Natural killer cell (primary cell): ENCODE measurements at regions of chr16 and their contacts with region 1.

Region 1: GRCh38 chr16:81403616-81404373 is 40.8 kb upstream of the CMIP start:
- DNase-seq: peak; percentile 83 to 88
- ATAC-seq: peak; percentile 88 to 96 (median 95)
- H3K4me3 ChIP-seq: no peak overlapping the region
- H3K4me3 Mint-ChIP-seq: no peak overlapping the region
- H3K27ac ChIP-seq: no peak overlapping the region
- H3K27ac Mint-ChIP-seq: peak overlapping the region in 1 of 2 donors; percentile 36
- H3K4me1 ChIP-seq: peaks cover 11% of the 10 kb centered on the region
- H3K4me1 Mint-ChIP-seq: peaks cover 0 to 8% of the 10 kb centered on the region in 2 donors
- H3K27me3 ChIP-seq: no peaks in the 10 kb centered on the region
- H3K27me3 Mint-ChIP-seq: no peaks in the 10 kb centered on the region
- CTCF ChIP-seq: peak; percentile 98

Region 2: DNA sequence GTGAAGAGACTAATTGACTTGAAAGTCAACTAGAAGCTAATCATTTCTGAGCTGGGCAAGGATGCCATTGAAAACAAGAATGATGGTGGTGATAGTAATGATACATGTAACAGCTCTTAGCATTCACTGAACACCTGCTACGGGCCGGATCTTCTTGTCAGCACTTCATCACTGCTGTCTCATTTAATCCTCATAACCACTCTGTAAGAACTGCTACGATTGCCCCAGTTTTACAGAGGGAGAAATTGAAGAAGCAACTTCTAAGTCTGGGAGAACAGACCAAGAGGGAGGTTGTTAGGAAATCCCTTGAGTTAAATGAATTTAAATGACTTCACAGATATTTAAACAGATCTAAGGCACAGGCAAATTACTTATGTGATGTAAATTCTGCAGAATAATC is 96.0 kb before region 1 on chr16:
- intact Hi-C with region 1: no loop called
- DNase-seq: no peak
- ATAC-seq: no peak
- H3K4me3 ChIP-seq: no peak overlapping the region
- H3K4me3 Mint-ChIP-seq: no peak overlapping the region
- H3K27ac ChIP-seq: no peak overlapping the region
- H3K27ac Mint-ChIP-seq: no peak overlapping the region
- H3K4me1 ChIP-seq: no peaks in the 10 kb centered on the region
- H3K4me1 Mint-ChIP-seq: peaks cover 18 to 24% of the 10 kb centered on the region in 2 donors
- H3K27me3 ChIP-seq: no peaks in the 10 kb centered on the region
- H3K27me3 Mint-ChIP-seq: no peaks in the 10 kb centered on the region
- CTCF ChIP-seq: no peak

Region 3: GRCh38 chr16:81632392-81633146 is 228.8 kb after region 1 on chr16:
- intact Hi-C with region 1: loop called (anchors 5 kb)
- DNase-seq: peak; percentile 68 to 91
- ATAC-seq: peak; percentile 84 to 87 (median 84)
- H3K4me3 ChIP-seq: no peak overlapping the region
- H3K4me3 Mint-ChIP-seq: peak overlapping the region; percentile 49
- H3K27ac ChIP-seq: peak overlapping the region; percentile 73
- H3K27ac Mint-ChIP-seq: peak overlapping the region; percentile 87 to 88
- H3K4me1 ChIP-seq: peaks cover 35% of the 10 kb centered on the region
- H3K4me1 Mint-ChIP-seq: peaks cover 40 to 53% of the 10 kb centered on the region in 2 donors
- H3K27me3 ChIP-seq: no peaks in the 10 kb centered on the region
- H3K27me3 Mint-ChIP-seq: no peaks in the 10 kb centered on the region
- CTCF ChIP-seq: no peak

Region 4: DNA sequence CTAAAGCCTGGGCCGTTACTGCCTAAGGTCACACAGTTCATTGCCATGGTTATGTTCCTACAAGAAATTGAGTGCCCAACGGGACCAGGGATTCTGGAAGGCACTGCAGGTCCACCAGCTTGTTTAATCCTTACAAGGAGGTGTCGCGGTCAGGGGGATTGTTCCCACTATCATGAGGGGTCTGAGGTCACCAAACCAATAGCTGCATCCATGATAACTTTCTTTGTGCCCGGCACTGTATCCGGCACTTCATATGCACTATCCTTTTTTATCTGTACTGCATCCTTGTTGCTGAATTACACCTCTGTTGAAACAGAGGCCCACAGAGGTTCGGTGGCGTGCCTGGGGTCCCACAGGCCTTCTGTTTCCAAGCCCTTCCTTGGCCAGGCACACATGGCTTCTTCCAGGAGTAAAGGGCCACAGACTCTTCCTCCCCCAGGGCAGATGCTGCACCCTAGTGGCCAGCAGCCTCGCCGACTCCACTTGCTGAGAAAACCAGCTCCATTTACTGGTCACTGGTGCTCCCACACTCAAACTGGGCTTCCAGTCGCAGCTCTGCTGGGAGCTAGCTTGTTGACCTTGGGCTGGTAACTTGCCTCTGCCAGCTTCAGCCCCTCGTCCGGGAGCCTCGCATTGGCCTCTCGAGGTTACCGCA is 293.3 kb after region 1 on chr16:
- intact Hi-C with region 1: loop called (anchors 1 kb)
- DNase-seq: peak; percentile 28 to 57
- ATAC-seq: peak; percentile 43 to 59 (median 52)
- H3K4me3 ChIP-seq: no peak overlapping the region
- H3K4me3 Mint-ChIP-seq: no peak overlapping the region
- H3K27ac ChIP-seq: no peak overlapping the region
- H3K27ac Mint-ChIP-seq: no peak overlapping the region
- H3K4me1 ChIP-seq: no peaks in the 10 kb centered on the region
- H3K4me1 Mint-ChIP-seq: no peaks in the 10 kb centered on the region
- H3K27me3 ChIP-seq: no peaks in the 10 kb centered on the region
- H3K27me3 Mint-ChIP-seq: no peaks in the 10 kb centered on the region
- CTCF ChIP-seq: peak; percentile 43

Region 5: DNA sequence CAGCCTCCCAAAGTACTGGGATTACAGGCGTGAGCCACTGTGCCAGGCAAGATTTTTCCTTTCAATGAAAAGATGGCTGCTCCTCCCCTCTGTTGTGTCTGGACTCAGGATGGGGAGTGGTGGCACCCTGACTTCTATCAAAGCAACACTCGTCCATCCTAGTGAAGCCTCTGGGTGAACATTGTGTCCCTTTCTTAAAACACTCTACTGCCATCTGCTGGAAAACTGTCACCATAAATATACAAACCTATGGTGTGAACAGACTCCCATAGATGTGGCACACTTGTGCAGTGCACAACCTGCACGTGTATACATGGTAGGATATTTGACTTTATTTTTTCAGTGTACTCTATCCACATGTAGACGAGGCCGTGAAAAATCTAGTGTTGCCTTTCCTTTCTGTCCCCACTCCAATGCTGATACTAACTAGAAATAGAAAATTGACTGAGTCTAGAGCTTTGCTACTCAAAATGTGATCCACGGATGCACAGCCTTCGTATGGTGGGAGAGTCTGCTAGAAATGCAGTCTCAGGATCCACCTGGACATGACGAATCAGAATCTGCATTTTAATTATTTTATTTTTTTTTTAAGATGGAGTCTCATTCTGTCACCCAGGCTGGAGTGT is 319.4 kb after region 1 on chr16:
- intact Hi-C with region 1: loop called (anchors 1 kb)
- DNase-seq: peak in 1 of 2 donors; percentile 88
- ATAC-seq: peak; percentile 83 to 86 (median 85)
- H3K4me3 ChIP-seq: no peak overlapping the region
- H3K4me3 Mint-ChIP-seq: no peak overlapping the region
- H3K27ac ChIP-seq: no peak overlapping the region
- H3K27ac Mint-ChIP-seq: no peak overlapping the region
- H3K4me1 ChIP-seq: peaks cover 14% of the 10 kb centered on the region
- H3K4me1 Mint-ChIP-seq: peaks cover 0 to 17% of the 10 kb centered on the region in 2 donors
- H3K27me3 ChIP-seq: no peaks in the 10 kb centered on the region
- H3K27me3 Mint-ChIP-seq: no peaks in the 10 kb centered on the region
- CTCF ChIP-seq: peak; percentile 74

Region 6: GRCh38 chr16:81737885-81738786 is 334.3 kb after region 1 on chr16:
- intact Hi-C with region 1: loop called (anchors 5 kb)
- DNase-seq: peak; percentile 80 to 93
- ATAC-seq: peak; percentile 89 to 97 (median 96)
- H3K4me3 ChIP-seq: peak overlapping the region; percentile 11
- H3K4me3 Mint-ChIP-seq: peak overlapping the region; percentile 58
- H3K27ac ChIP-seq: no peak overlapping the region
- H3K27ac Mint-ChIP-seq: peak overlapping the region in 1 of 2 donors; percentile 75
- H3K4me1 ChIP-seq: peaks cover 35% of the 10 kb centered on the region
- H3K4me1 Mint-ChIP-seq: peaks cover 7 to 19% of the 10 kb centered on the region in 2 donors
- H3K27me3 ChIP-seq: no peaks in the 10 kb centered on the region
- H3K27me3 Mint-ChIP-seq: no peaks in the 10 kb centered on the region
- CTCF ChIP-seq: peak; percentile 88